ENCODE measurements at regions of chr2 and their contacts with region 1.

Region 1: DNA sequence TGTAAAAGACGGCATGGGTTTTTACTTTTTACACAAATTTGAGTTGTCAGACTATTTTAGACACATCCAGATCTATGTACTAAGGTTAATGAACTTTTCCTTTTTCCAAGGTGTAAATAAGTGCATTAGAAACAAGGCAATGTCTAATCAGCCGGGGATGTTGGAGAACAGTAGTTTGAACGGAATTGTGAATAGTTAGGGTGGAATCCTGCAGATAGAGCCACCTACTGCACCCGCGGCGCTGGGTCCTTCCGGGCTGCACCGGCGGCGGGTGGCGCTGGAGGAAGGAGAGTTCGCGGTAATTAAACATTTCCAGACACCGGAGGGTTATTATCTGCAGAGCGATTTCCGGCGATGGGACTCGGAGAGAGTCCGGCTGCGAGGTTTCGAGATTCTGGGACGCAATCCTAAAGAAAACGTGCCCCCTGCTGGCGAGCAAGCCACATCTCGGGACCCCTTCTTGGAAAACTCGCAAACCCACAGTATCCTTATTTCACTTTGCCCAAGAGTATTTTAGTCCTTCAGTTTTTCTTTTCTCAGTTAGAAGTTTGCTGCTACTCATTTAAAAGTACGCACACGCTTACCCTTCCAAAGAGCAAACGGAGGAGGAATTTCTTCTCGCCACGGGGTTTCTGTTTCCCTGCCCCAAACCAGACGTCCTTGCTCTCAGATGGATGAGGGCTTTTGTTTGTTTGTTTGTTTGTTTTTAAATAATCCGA is 4.5 kb upstream of the OSR1 start:
- DNase-seq: peak; percentile 79 to 85 (median 84)
- ATAC-seq: peak; percentile 21 to 63 (median 57)
- H3K4me3 ChIP-seq: peak overlapping the region; percentile 47 to 76 (median 64)
- H3K27ac ChIP-seq: peak overlapping the region in 9 of 12 donors; percentile 14 to 84 (median 38)
- H3K4me1 ChIP-seq: peaks cover 0 to 37% (median 14%) of the 10 kb centered on the region in 12 donors
- H3K27me3 ChIP-seq: peaks cover 0 to 52% (median 9%) of the 10 kb centered on the region in 9 donors
- CTCF ChIP-seq: peak; percentile 72 to 90 (median 86)
- POLR2A ChIP-seq: no peak

Region 2: DNA sequence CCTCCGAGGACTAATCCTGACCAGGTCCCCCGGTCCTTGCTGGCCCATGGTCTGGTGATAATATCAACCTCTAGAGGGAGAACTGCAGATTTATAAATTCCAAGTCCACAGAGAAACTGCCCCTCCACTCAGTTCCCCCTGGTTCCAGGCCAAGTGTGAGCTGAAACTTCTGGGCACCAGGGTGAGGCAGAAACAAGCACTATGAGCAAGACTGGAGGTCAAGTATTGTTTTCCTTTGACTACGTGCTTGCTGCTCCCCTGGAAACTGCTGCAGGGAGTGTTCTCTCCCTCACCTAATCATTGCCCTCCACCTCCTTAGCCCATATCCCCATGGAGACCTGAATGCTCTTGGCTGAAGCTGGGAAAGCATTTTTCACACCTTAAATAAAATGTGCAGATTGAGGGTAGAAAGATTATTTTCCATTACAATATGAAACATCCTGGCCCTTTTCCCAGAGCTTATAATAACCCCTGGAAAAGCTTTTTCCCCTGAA is 937.7 kb before region 1 on chr2:
- intact Hi-C with region 1: loop called in 7 of 10 experiments (anchors 5 to 10 kb)
- DNase-seq: no peak
- ATAC-seq: no peak
- H3K4me3 ChIP-seq: no peak overlapping the region
- H3K27ac ChIP-seq: no peak overlapping the region
- H3K4me1 ChIP-seq: no peaks in the 10 kb centered on the region
- H3K27me3 ChIP-seq: no peaks in the 10 kb centered on the region
- CTCF ChIP-seq: no peak
- POLR2A ChIP-seq: no peak

Region 3: DNA sequence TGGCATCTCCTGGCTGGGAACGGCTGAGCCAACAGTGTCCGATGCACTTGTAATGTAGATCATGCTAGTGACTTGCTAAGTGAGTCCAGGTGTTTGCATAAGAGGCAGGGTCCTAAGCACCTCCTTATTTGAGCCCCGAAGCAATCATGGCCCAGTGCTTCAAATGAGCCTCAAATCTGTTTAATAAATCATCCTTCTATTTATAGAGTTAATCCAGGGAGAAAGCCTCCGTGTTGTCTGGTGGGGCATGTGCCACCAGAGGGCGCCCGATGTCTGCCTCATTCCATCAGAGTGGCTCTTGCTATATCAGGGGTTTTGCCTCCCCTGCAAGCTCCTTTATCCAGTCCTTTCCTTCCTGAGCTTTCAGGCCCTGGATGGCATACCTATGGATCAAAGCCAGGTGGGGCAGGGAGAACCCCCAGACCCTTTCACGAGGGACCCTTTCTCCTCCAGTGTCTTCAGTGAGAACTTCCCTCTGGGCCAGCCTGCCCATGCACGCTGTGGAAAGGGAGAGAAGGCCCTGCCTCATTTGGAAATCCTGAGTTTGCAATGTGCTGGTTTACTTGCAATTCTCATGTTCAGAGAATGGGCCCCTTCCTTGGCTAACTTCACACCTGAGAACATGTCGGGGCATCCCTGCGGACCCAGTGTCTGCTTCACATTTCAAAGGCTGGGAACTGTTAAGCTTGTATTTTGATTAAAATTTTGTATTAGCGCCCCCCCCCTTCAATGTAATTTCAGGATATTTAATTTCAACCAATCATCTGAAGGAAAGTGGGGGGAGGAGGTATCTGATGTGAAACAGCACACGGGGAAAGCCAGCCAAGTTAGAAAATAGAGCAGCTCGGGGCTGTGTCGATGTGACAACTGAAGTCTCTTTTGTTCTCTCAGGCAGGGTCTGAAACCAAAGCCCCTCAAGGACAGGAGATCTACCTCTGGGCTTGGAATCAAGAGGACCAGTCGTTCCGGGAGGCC is 842.2 kb before region 1 on chr2:
- intact Hi-C with region 1: loop called (anchors 2 to 10 kb)
- DNase-seq: peak; percentile 80 to 90 (median 82)
- ATAC-seq: peak; percentile 82 to 89 (median 85)
- H3K4me3 ChIP-seq: peak overlapping the region in 7 of 12 donors; percentile 6 to 39 (median 31)
- H3K27ac ChIP-seq: peak overlapping the region; percentile 25 to 79 (median 62)
- H3K4me1 ChIP-seq: peaks cover 0 to 36% (median 15%) of the 10 kb centered on the region in 12 donors
- H3K27me3 ChIP-seq: no peaks in the 10 kb centered on the region
- CTCF ChIP-seq: peak; percentile 75 to 97 (median 92)
- POLR2A ChIP-seq: no peak

Region 4: DNA sequence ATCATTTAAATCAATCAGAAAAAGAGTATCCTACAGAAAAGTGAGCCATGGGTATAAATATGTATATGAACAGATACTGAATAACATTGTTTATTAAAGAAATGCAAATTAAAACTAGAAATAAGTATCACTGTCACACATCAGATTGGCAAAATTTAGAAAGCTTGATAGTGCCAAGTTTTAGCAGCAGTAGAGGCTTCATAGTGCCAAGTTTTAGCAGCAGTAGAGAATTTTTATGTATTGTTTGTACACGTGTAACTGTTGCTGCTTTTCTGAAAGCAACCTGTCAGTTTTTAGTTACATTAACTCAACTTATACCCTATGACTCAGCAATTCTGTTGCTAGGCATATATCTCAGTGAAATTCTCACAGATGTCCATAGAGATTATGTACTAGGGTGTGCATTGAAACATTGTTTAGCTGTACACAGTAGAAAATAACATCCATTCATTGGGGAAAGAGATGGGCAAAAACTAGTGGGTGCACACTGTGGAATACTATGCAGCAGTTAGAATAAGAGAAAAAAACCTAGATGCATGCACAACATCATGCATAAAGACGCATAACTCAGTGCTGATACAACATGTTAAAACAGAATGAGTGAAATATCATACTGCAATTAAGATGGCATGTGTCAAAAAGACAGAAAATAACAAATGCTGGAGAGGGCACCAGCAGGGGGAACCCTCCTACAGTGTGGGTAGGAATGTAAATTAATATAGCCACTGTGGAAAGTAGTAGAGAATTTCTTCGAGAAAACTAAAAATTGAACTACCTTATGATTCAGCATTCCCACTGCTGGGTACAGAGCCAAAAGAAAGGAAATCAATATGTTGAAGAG is 479.1 kb before region 1 on chr2:
- intact Hi-C with region 1: loop called in 2 of 10 experiments (anchors 10 kb)
- DNase-seq: no peak
- ATAC-seq: no peak
- H3K4me3 ChIP-seq: no peak overlapping the region
- H3K27ac ChIP-seq: no peak overlapping the region
- H3K4me1 ChIP-seq: peaks cover 0 to 5% (median 0%) of the 10 kb centered on the region in 12 donors
- H3K27me3 ChIP-seq: no peaks in the 10 kb centered on the region
- CTCF ChIP-seq: peak in 8 of 12 donors; percentile 16 to 34 (median 26)
- POLR2A ChIP-seq: no peak

Region 5: GRCh38 chr2:19256121-19256601 is 106.8 kb before region 1 on chr2:
- intact Hi-C with region 1: no loop called
- DNase-seq: no peak
- ATAC-seq: no peak
- H3K4me3 ChIP-seq: no peak overlapping the region
- H3K27ac ChIP-seq: no peak overlapping the region
- H3K4me1 ChIP-seq: peaks cover 0 to 5% (median 0%) of the 10 kb centered on the region in 12 donors
- H3K27me3 ChIP-seq: no peaks in the 10 kb centered on the region
- CTCF ChIP-seq: no peak
- POLR2A ChIP-seq: no peak

Region 6: GRCh38 chr2:19667085-19667484 is 304.2 kb after region 1 on chr2:
- intact Hi-C with region 1: loop called in 3 of 10 experiments (anchors 10 kb)
- DNase-seq: no peak
- ATAC-seq: peak in 1 of 4 donors; percentile 29
- H3K4me3 ChIP-seq: no peak overlapping the region
- H3K27ac ChIP-seq: no peak overlapping the region
- H3K4me1 ChIP-seq: peaks cover 0 to 16% (median 0%) of the 10 kb centered on the region in 12 donors
- H3K27me3 ChIP-seq: no peaks in the 10 kb centered on the region
- CTCF ChIP-seq: peak in 5 of 12 donors; percentile 11 to 35 (median 27)
- POLR2A ChIP-seq: no peak

Region 7: GRCh38 chr2:19682493-19682892 is 319.6 kb after region 1 on chr2:
- intact Hi-C with region 1: loop called in 3 of 10 experiments (anchors 10 kb)
- DNase-seq: no peak
- ATAC-seq: no peak
- H3K4me3 ChIP-seq: no peak overlapping the region
- H3K27ac ChIP-seq: no peak overlapping the region
- H3K4me1 ChIP-seq: peaks cover 0 to 4% (median 0%) of the 10 kb centered on the region in 12 donors
- H3K27me3 ChIP-seq: no peaks in the 10 kb centered on the region
- CTCF ChIP-seq: no peak
- POLR2A ChIP-seq: no peak

Region 8: GRCh38 chr2:19863303-19864041 is 500.6 kb after region 1 on chr2:
- intact Hi-C with region 1: loop called in 6 of 10 experiments (anchors 1 to 10 kb)
- DNase-seq: peak; percentile 57 to 88 (median 76)
- ATAC-seq: peak; percentile 63 to 90 (median 88)
- H3K4me3 ChIP-seq: peak overlapping the region in 7 of 12 donors; percentile 6 to 46 (median 26)
- H3K27ac ChIP-seq: peak overlapping the region in 1 of 12 donors; percentile 80
- H3K4me1 ChIP-seq: peaks cover 0 to 11% (median 6%) of the 10 kb centered on the region in 12 donors
- H3K27me3 ChIP-seq: no peaks in the 10 kb centered on the region
- CTCF ChIP-seq: peak; percentile 93 to 99 (median 97)
- POLR2A ChIP-seq: peak in 1 of 2 donors; percentile 24